ENCODE measurements at regions of chr7 and their contacts with region 1.

Region 1: GRCh38 chr7:106166655-106167342 is 54.7 kb upstream of the SYPL1 start:
- DNase-seq: peak; percentile 57
- H3K4me3 Mint-ChIP-seq: no peak overlapping the region
- H3K27ac Mint-ChIP-seq: no peak overlapping the region
- H3K4me1 Mint-ChIP-seq: peaks cover 2% of the 10 kb centered on the region
- H3K27me3 Mint-ChIP-seq: peaks cover 25% of the 10 kb centered on the region

Region 2: GRCh38 chr7:106056513-106057203 is 110.1 kb before region 1 on chr7:
- CTCF ChIA-PET with region 1: interaction called, 45 read pairs
- DNase-seq: peak; percentile 81
- H3K4me3 Mint-ChIP-seq: no peak overlapping the region
- H3K27ac Mint-ChIP-seq: no peak overlapping the region
- H3K4me1 Mint-ChIP-seq: peaks cover 28% of the 10 kb centered on the region
- H3K27me3 Mint-ChIP-seq: peaks cover 32% of the 10 kb centered on the region

Region 3: DNA sequence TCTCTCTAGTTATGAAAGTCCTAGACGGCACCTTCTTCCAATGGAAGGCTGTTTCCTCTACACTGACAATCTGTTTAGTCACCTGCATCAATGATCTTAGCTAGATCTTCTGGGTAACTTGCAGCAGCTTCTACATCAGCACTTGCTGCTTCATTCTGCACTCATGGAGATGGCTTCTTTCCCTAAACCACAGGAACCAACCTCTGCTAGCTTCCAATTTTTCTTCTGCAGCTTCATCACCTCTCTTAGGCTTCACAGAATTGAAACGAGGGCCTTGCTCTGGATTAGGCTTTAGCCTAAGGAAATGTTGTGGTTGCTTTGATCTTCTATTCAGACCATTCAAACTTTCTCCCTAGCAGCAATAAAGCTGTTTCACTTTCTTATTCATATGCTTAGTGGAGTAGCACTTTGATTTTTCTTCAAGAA is 93.3 kb after region 1 on chr7:
- CTCF ChIA-PET with region 1: no interaction called
- DNase-seq: peak; percentile 22
- H3K4me3 Mint-ChIP-seq: no peak overlapping the region
- H3K27ac Mint-ChIP-seq: peak overlapping the region; percentile 75
- H3K4me1 Mint-ChIP-seq: peaks cover 31% of the 10 kb centered on the region
- H3K27me3 Mint-ChIP-seq: no peaks in the 10 kb centered on the region